Astrocyte of the cerebellum (primary cell): ENCODE measurements at regions of chr21 and their contacts with region 1.

Region 1: DNA sequence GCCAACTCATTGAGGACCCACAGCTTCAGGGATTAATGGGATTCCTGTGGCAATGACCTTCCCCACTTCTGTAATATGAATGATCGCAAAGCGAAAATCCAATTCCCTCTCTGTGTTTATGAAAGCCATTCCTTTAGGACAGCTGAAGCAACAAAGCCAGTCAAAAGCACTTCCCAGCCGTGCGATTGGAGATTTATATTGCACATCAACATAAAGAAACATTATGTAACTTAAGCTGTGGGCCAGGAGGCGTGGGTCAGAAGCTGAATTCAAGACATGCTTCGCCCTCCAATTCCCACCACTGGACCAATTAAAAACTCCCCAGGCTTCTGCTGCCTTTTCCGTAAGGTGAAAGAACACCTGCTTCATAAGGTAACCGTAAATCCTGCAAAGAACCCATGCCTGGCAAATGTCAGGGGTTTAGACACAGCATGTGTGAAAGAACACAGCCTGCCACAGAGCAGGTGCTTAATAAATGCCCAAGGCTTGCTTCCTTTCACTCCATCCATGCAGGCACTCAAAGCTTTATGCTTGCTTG is 138.9 kb upstream of the SOD1 start:
- DNase-seq: peak; percentile 28
- H3K4me3 ChIP-seq: no peak overlapping the region
- CTCF ChIP-seq: no peak

Region 2: GRCh38 chr21:31457675-31458074 is 63.0 kb before region 1 on chr21:
- in situ Hi-C with region 1: no loop called
- DNase-seq: no peak
- H3K4me3 ChIP-seq: no peak overlapping the region
- CTCF ChIP-seq: no peak

Region 3: GRCh38 chr21:31489014-31489413 is 31.6 kb before region 1 on chr21:
- in situ Hi-C with region 1: loop called (anchors 5 kb)
- DNase-seq: no peak
- H3K4me3 ChIP-seq: no peak overlapping the region
- CTCF ChIP-seq: no peak